ENCODE measurements at regions of chr19 and their contacts with region 1.

Region 1: GRCh38 chr19:44657211-44657921 is 13.7 kb downstream of the PVR start:
- DNase-seq: peak; percentile 79
- ATAC-seq: peak; percentile 57

Region 2: DNA sequence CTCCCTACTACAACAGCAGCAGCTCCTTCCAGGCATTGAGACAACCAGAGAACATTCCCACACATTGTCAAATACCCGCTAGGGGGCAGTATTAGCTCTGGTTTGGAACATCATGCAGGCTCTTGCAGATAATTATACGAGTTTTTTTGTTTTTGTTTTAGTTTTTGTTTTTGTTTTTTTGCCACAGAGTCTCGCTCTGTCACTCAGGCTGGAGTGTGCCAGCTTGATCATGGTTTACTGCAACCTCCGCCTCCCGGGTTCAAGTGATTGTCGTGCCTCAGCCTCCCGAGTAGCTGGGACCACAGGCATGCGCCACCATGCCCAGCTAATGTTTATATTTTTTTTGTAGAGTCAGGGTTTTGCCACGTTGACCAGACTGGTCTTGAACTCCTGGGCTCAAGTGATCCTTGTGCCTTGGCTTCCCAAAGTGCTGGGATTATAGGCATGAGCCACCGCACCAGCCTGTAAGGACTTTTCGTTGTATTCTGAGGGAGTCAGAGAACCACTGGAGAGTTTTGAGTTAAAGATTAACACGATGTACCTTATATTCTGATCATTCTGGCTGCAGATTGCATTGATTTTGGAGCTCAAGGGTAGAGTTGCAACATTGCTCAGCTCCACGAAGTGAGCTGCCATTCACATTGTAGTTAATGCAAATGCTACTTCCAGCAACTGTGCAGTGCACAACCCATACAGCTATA is 86.2 kb before region 1 on chr19:
- intact Hi-C with region 1: loop called (anchors 5 kb)
- DNase-seq: peak; percentile 63
- ATAC-seq: peak; percentile 57

Measured in sciatic nerve (tissue), 2 donors.